KBM-7 (cell line): ENCODE measurements at regions of chr19 and their contacts with region 1.

Region 1: DNA sequence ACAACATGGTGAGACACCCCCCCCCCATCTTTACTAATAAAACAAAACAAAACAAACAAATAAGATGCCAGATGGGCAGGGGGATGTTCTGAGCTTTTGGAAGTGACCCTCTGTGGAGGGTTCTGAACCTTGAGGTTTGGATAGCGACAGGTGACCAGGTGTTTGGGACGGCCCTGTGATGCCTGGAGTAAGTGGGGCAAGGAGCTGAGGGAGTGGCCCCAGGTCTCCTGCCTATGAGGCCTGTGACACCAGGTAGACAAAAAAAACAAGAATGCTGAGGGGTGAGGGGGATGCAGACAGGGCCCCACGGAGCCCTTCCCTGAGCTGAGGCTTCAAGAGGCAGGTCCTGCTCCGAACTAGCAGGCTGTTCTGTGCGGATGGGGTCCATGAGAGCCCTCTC is 9.2 kb downstream of the ADGRE2 start:
- DNase-seq: no peak

Region 2: DNA sequence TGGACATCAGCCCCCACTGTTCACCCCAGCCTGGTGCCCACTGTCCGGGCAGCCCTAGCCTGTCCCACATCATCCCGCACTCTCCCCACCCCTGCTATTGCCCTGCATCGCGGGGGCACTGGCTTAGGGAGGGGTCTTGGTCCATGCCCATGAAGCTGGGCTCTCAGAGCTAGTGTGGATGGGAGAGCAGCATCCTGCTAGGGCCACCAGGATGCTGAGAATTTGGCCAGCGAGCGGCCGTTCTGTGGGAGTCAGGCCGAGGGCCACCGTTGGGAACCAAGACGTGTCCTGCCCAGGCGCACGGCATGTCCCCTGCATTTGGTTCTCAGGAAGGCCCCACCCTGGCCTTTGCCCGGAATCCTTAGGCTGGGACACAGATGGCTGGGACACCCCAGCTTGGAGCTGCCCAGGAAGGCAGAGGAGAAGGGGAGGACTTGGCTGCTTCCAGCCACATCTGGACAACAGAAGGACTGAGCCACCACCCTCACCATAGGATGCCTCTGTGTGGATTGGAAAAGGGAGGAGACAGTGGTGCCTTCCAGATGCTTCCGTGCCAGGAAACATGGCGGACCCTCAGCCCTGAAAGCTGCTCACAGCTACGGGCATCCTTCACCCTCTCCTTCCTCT is 373.4 kb before region 1 on chr19:
- in situ Hi-C with region 1: loop called (anchors 5 kb)
- DNase-seq: no peak